Naive thymus-derived CD4-positive, alpha-beta T cell (primary cell): ENCODE measurements at regions of chr17 and their contacts with region 1.

Region 1: DNA sequence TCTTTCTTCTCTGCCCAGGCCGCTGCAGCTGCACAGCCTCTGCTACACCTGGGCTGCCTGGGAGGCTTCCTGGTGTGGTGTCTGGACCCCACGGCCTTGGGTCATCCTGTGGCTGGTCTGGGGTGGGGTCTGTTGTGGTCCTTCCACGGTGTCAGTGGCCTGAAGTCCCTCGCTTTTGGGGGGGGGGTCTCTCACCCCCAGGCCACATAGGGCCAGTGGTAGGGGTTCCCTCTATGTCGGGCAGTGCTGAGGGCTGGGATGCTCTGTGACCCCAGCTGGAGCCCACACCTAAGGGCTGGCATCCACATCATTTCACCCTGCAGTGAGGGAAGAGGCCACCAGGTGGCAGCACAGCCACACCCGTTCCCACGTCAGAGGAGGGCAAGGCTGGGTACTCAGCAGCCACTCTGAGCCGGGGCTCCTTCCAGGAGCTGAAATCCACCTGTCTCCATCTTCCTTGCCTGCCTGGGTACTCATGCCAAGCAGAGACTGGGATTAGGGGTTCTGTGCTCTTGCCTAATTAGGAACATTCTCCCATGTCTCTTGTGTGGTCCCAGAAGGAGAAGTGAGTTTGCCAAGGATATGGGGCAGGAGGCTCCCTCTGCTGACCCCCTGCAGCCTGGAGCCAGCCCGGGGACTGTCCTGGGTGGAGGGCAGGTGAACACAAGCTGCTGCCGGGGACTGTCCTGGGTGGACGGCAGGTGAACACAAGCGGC is 13.0 kb downstream of the ENGASE start:
- DNase-seq: peak; percentile 43 to 80 (median 64)
- ATAC-seq: peak; percentile 89
- H3K4me3 ChIP-seq: no peak overlapping the region
- H3K4me3 Mint-ChIP-seq: no peak overlapping the region
- H3K27ac ChIP-seq: no peak overlapping the region
- H3K27ac Mint-ChIP-seq: no peak overlapping the region
- H3K4me1 ChIP-seq: no peaks in the 10 kb centered on the region
- H3K4me1 Mint-ChIP-seq: peaks cover 0 to 5% (median 0%) of the 10 kb centered on the region in 7 donors
- H3K27me3 ChIP-seq: no peaks in the 10 kb centered on the region
- H3K27me3 Mint-ChIP-seq: peaks cover 0 to 5% (median 2%) of the 10 kb centered on the region in 5 donors

Region 2: DNA sequence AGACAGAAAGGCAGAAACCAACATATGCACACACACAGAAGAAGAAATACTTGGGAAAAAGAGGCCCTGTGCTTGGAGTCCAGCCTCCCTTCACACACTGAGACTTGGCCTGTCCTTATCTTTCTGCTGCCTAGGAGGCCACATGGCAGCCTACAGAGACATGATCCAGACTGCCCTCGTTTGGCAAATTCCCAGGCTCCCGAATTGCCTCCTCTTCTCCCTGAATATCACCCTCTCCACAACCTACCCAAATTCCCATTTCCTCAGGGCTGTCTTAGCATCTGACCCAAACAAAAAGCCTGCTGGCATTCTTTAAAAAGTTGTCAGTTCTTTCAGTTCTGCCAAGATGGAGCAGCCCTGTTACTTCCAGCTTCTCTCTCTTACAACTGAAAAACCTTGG is 570.2 kb before region 1 on chr17:
- CTCF ChIA-PET with region 1: no interaction called
- POLR2A ChIA-PET with region 1: no interaction called
- intact Hi-C with region 1: no loop called
- DNase-seq: no peak
- ATAC-seq: no peak
- H3K4me3 ChIP-seq: no peak overlapping the region
- H3K4me3 Mint-ChIP-seq: no peak overlapping the region
- H3K27ac ChIP-seq: no peak overlapping the region
- H3K27ac Mint-ChIP-seq: no peak overlapping the region
- H3K4me1 ChIP-seq: no peaks in the 10 kb centered on the region
- H3K4me1 Mint-ChIP-seq: no peaks in the 10 kb centered on the region
- H3K27me3 ChIP-seq: no peaks in the 10 kb centered on the region
- H3K27me3 Mint-ChIP-seq: peaks cover 0 to 36% (median 0%) of the 10 kb centered on the region in 5 donors

Region 3: DNA sequence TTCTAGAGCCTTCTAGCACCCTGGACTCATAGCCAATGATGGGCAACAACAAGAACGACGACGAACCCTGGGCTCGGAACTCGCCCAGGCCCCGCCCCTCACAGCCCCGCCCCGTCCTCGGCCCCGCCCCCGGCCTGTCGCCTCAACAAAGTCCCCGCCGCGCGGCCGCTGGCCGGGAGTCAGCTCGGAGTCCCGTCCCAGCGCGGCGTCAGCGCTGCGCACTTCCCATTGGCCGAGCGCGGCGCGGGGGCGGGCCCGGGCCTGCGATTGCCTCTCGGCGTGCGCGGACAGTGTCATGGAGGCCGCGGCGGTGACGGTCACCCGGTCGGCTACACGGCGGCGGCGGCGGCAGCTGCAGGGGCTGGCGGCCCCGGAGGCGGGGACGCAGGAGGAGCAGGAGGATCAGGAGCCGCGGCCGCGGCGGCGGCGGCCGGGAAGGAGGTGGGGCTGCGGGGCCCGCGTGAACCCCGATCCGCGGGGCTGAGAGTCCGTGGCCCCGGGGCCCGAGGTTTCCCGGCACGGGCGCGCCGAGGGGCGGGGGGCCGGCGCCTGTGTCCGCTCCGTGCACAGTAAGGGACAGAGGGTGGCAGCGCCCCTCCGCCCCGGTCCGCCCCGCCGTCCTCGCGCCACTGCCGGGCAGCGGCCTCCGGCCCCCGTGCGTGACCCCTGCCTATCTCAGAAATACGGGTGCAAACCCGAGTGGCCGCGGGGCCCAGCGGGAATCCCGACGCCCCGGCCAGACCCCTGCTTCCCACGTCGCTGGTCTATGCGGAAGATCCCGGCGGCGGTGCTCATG is 12.7 kb before region 1 on chr17 and contains the start of gene ENGASE:
- CTCF ChIA-PET with region 1: interaction called, 11 read pairs
- POLR2A ChIA-PET with region 1: no interaction called
- intact Hi-C with region 1: no loop called
- DNase-seq: peak; percentile 78 to 97 (median 86)
- ATAC-seq: peak; percentile 99
- H3K4me3 ChIP-seq: peak within 1 kb of the TSS; percentile 64
- H3K4me3 Mint-ChIP-seq: peak within 1 kb of the TSS; percentile 85 to 95 (median 90)
- H3K27ac ChIP-seq: peak within 1 kb of the TSS; percentile 74
- H3K27ac Mint-ChIP-seq: peak within 1 kb of the TSS; percentile 64 to 94 (median 88)
- H3K4me1 ChIP-seq: peaks cover 8 to 14% of the 10 kb centered on the region in 2 donors
- H3K4me1 Mint-ChIP-seq: peaks cover 9 to 26% (median 18%) of the 10 kb centered on the region in 7 donors
- H3K27me3 ChIP-seq: no peaks in the 10 kb centered on the region
- H3K27me3 Mint-ChIP-seq: peaks cover 0 to 4% (median 0%) of the 10 kb centered on the region in 5 donors
- total RNA-seq, gene ENGASE: 41.5 to 214 (median 85.9) TPM

Region 4: DNA sequence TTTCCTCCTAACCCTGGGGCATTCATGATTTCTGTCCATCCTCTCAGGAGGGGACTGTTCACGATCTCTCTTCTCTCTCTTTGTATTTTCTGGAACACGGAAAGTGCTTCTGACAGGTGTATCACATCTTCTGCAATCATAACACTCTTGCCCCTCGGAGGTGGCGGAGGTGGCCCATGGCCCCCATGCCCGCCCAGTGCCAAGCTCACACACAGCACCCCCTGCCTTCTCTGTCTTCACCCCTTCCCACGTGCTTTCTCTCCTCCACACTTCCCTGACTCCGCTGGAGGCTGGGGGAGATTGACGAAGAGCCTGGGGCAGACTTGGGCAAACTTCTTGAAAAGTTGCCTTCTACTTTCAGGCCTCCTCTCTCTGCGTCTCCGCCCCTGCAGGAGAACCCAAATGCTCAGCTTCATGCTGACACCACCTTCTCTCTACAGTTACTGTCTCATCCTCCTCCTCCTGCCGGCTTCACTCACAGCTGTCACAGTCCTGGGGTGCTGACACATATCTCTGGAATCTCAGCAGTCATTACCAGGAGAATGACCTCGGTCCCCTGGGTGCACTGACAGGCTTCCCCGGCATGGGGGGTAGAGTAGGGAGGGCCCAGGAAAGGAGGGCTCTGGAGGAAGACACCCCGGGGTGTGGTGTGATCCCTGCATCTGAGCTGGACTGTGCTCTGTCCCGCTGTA is 114.1 kb after region 1 on chr17:
- CTCF ChIA-PET with region 1: no interaction called
- POLR2A ChIA-PET with region 1: no interaction called
- intact Hi-C with region 1: loop called in 1 of 2 experiments (anchors 1 kb)
- DNase-seq: no peak
- ATAC-seq: no peak
- H3K4me3 ChIP-seq: no peak overlapping the region
- H3K4me3 Mint-ChIP-seq: no peak overlapping the region
- H3K27ac ChIP-seq: no peak overlapping the region
- H3K27ac Mint-ChIP-seq: no peak overlapping the region
- H3K4me1 ChIP-seq: no peaks in the 10 kb centered on the region
- H3K4me1 Mint-ChIP-seq: no peaks in the 10 kb centered on the region
- H3K27me3 ChIP-seq: no peaks in the 10 kb centered on the region
- H3K27me3 Mint-ChIP-seq: peaks cover 3 to 57% (median 31%) of the 10 kb centered on the region in 5 donors

Region 5: GRCh38 chr17:79393358-79394202 is 306.0 kb after region 1 on chr17:
- CTCF ChIA-PET with region 1: interaction called, 14 read pairs
- POLR2A ChIA-PET with region 1: no interaction called
- intact Hi-C with region 1: loop called in 1 of 2 experiments (anchors 1 kb)
- DNase-seq: peak; percentile 30 to 75 (median 59)
- ATAC-seq: peak; percentile 75
- H3K4me3 ChIP-seq: no peak overlapping the region
- H3K4me3 Mint-ChIP-seq: no peak overlapping the region
- H3K27ac ChIP-seq: no peak overlapping the region
- H3K27ac Mint-ChIP-seq: no peak overlapping the region
- H3K4me1 ChIP-seq: no peaks in the 10 kb centered on the region
- H3K4me1 Mint-ChIP-seq: peaks cover 0 to 10% (median 5%) of the 10 kb centered on the region in 7 donors
- H3K27me3 ChIP-seq: peaks cover 0 to 11% of the 10 kb centered on the region in 2 donors
- H3K27me3 Mint-ChIP-seq: peaks cover 23 to 70% (median 51%) of the 10 kb centered on the region in 5 donors

Region 6: GRCh38 chr17:79707931-79708891 is 620.6 kb after region 1 on chr17:
- CTCF ChIA-PET with region 1: no interaction called
- POLR2A ChIA-PET with region 1: no interaction called
- intact Hi-C with region 1: loop called in 1 of 2 experiments (anchors 10 kb)
- DNase-seq: peak; percentile 32 to 66 (median 56)
- ATAC-seq: peak; percentile 80
- H3K4me3 ChIP-seq: no peak overlapping the region
- H3K4me3 Mint-ChIP-seq: peak overlapping the region in 7 of 10 donors; percentile 13 to 69 (median 43)
- H3K27ac ChIP-seq: no peak overlapping the region
- H3K27ac Mint-ChIP-seq: no peak overlapping the region
- H3K4me1 ChIP-seq: peaks cover 0 to 4% of the 10 kb centered on the region in 2 donors
- H3K4me1 Mint-ChIP-seq: peaks cover 0 to 1% (median 0%) of the 10 kb centered on the region in 7 donors
- H3K27me3 ChIP-seq: no peaks in the 10 kb centered on the region
- H3K27me3 Mint-ChIP-seq: peaks cover 0 to 4% (median 0%) of the 10 kb centered on the region in 5 donors

Region 7: GRCh38 chr17:80101011-80101945 is 1013.7 kb after region 1 on chr17 and contains the start of gene GAA:
- CTCF ChIA-PET with region 1: no interaction called
- POLR2A ChIA-PET with region 1: no interaction called
- intact Hi-C with region 1: no loop called
- DNase-seq: peak; percentile 84 to 97 (median 91)
- ATAC-seq: peak; percentile 97
- H3K4me3 ChIP-seq: peak within 1 kb of the TSS; percentile 79
- H3K4me3 Mint-ChIP-seq: peak within 1 kb of the TSS; percentile 85 to 93 (median 90)
- H3K27ac ChIP-seq: peak within 1 kb of the TSS; percentile 86
- H3K27ac Mint-ChIP-seq: peak within 1 kb of the TSS; percentile 81 to 93 (median 86)
- H3K4me1 ChIP-seq: peaks cover 10 to 16% of the 10 kb centered on the region in 2 donors
- H3K4me1 Mint-ChIP-seq: peaks cover 20 to 30% (median 27%) of the 10 kb centered on the region in 7 donors
- H3K27me3 ChIP-seq: no peaks in the 10 kb centered on the region
- H3K27me3 Mint-ChIP-seq: peaks cover 0 to 10% (median 0%) of the 10 kb centered on the region in 5 donors
- total RNA-seq, gene GAA: 18.5 to 67.8 (median 54.6) TPM